HCT116 (cell line): ENCODE measurements at regions of chr9 and their contacts with region 1.

Region 1: GRCh38 chr9:5575000-5575399 is 53.9 kb upstream of the RIC1 start:
- DNase-seq: no peak
- ATAC-seq: no peak; the same call in 1 of the 2 replicates
- H3K4me3 ChIP-seq: no peak overlapping the region
- H3K27ac ChIP-seq: no peak overlapping the region
- H3K4me1 ChIP-seq: no peaks in the 10 kb centered on the region
- H3K27me3 ChIP-seq: no peaks in the 10 kb centered on the region
- CTCF ChIP-seq: peak in 1 of 3 experiments; percentile 10; a peak in 1 of 6 replicates
- POLR2A ChIP-seq: no peak
- RAD21 ChIP-seq: no peak

Region 2: GRCh38 chr9:5510360-5510931 is 64.6 kb before region 1 on chr9 and contains the start of gene PDCD1LG2:
- CTCF ChIA-PET with region 1: no interaction called
- POLR2A ChIA-PET with region 1: no interaction called
- RAD21 ChIA-PET with region 1: no interaction called
- intact Hi-C with region 1: loop called (anchors 10 kb)
- DNase-seq: no peak
- ATAC-seq: no peak
- H3K4me3 ChIP-seq: no peak within 1 kb of the TSS
- H3K27ac ChIP-seq: no peak within 1 kb of the TSS
- H3K4me1 ChIP-seq: peaks cover 0 to 25% of the 10 kb centered on the region in 2 experiments; a peak in 2 of 4 replicates
- H3K27me3 ChIP-seq: no peaks in the 10 kb centered on the region
- CTCF ChIP-seq: no peak
- POLR2A ChIP-seq: no peak
- RAD21 ChIP-seq: no peak
- total RNA-seq, gene PDCD1LG2: not detected